Activated B cell treated with CpG ODN at 0.5 μM for 24 hours (primary cell): ENCODE measurements at regions of chr9 and their contacts with region 1.

Region 1: DNA sequence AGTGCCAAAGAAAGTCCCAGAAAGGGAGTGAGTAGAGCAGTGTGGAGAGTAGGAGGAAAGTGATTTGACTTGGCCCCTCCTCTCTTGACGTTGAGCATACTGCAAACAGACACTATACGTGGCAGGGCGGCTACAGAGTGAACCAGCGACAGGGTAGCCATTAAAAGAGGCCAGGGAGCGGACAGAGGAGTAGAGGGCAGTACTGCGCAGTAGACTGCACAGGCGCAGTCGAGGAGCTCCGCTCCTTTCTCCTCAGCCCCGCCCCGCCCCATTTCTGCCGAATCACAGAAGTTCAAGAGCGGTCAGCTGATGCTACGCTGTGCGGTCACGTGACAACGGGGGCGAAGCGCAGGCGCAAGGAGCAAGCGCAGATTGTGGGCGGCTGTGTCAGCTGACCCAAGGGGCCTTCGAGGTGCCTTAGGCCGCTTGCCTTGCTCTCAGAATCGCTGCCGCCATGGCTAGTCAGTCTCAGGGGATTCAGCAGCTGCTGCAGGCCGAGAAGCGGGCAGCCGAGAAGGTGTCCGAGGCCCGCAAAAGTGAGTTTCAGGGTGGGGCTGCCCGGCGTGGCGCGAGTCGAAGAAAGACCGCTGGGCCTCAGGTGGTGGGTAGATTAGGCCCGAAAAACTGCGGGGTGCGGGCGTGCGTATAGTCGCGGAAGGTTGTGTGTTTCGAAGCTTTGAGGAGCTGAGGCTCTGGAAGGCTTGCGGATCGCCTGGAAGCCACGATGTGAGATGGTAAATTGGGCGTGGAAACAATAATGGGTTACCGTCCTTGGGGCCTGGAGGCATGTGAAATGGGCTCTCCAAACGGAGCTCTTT is at the start of gene ATP6V1G1:
- DNase-seq: peak; percentile 96
- ATAC-seq: peak; percentile 93
- H3K4me3 Mint-ChIP-seq: peak within 1 kb of the TSS; percentile 99
- H3K27ac Mint-ChIP-seq: peak within 1 kb of the TSS; percentile 99
- H3K4me1 Mint-ChIP-seq: peaks cover 53% of the 10 kb centered on the region
- H3K27me3 Mint-ChIP-seq: no peaks in the 10 kb centered on the region
- CTCF ChIP-seq: no peak
- total RNA-seq, gene ATP6V1G1: 68.4 and 70.2 TPM in 2 replicates

Region 2: DNA sequence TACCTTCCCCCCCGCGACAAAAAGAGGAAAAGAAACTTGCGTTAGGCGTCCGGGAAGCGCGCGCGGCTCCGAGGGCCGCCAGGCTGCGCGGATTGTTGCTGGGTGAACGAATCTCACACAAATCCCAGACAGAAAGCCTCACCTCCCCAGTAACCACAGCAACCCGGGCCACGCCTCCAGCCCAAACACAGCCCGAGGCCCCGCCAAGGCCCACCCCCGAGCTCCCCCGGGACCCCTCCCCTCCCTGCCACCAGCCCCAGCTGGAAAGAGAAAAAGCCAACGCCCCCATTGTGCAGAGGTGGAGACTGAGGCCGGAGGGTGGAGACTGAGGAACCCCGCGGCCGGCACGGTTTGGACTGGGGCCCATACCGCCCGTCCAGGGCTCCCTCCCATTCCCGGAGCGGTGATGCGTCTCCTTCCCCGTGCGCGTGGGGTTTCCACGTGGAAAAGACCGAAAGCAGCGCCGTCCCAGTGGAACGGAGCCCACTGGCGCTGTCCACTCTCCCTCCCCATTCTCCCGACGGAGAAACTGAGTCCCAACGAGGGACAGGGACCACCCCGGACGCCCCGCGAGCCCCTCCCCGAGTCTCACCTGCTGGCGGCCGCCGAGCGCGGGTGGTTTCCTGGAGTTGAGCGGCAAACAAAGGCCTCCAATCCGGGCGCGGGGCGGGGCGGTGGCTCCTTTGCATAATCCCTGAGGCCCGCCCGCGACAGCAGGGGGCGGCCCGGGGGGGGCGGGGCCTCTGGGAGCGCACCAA is 189.6 kb before region 1 on chr9:
- CTCF ChIA-PET with region 1: interaction called, 5 read pairs
- POLR2A ChIA-PET with region 1: interaction called, 3 read pairs
- intact Hi-C with region 1: loop called (anchors 1 kb)
- DNase-seq: peak; percentile 96
- ATAC-seq: peak; percentile 78
- H3K4me3 Mint-ChIP-seq: peak overlapping the region; percentile 89
- H3K27ac Mint-ChIP-seq: peak overlapping the region; percentile 94
- H3K4me1 Mint-ChIP-seq: peaks cover 49% of the 10 kb centered on the region
- H3K27me3 Mint-ChIP-seq: no peaks in the 10 kb centered on the region
- CTCF ChIP-seq: no peak

Region 3: DNA sequence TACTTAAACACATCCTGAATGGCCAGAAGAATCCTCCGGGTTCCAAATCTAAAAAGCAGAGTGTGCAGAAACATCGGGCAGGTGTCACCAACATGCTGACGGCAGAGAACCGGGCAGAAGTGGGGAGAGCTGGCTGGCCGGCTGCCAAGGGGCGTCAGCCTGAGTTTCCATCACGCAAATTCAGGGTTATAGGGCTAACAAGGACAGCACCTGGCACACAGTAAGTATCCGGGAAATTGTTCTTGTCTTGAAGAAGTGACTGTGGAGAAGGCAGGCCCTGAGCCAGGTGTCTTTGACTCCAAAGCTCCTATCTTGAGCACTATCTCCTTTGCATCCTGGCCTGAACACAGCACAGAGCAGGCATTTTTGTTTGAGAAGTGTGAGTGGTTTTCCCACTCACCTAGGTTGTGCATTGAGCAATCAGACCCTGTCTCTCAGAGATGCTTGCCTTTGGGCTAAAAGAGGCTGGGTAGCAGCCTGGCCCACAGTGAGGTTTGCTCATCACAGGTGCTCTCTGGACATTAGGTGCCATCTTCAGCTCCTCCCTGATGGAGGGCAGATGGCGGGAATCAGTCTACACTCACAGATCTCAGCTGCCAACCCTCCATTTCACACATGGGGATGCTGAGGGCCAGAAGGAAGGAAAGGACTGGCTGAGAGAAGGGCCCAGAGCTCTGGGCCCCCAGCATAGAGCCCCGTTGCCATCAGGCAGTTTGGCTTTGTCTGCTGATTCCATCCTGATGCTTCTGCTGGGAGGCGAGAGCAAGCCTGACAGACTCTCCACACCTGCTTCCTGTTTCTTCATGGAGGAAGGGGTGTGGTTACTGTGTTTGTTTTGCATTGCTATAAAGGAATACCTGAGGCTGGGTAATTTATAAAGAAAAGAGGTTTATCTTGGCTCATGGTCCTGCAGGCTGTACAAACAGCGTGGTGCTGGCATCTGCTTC is 135.1 kb before region 1 on chr9:
- CTCF ChIA-PET with region 1: no interaction called
- POLR2A ChIA-PET with region 1: interaction called, 4 read pairs
- intact Hi-C with region 1: loop called (anchors 2 kb)
- DNase-seq: peak; percentile 61
- ATAC-seq: peak; percentile 35
- H3K4me3 Mint-ChIP-seq: peak overlapping the region; percentile 55
- H3K27ac Mint-ChIP-seq: peak overlapping the region; percentile 95
- H3K4me1 Mint-ChIP-seq: peaks cover 61% of the 10 kb centered on the region
- H3K27me3 Mint-ChIP-seq: no peaks in the 10 kb centered on the region
- CTCF ChIP-seq: no peak

Region 4: DNA sequence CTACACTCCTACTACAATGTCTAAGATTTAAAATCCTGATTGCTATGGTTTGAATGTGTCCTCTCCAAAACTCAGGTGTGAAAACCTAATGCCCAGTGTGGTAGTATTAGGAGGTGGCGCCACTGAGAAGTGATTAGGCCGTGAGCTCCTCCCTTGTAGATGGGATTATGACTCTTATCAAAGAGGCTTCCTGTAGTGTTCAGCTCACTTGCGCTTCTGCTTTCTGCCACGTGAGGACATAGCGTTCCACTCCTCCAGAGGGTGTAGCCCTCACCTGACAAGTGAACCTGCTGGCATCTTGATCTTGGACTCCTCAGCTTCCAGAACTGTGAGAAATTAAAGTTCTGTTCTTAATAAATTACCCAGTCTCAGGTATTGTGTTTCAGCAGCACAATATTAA is 49.4 kb before region 1 on chr9:
- CTCF ChIA-PET with region 1: interaction called, 28 read pairs
- POLR2A ChIA-PET with region 1: interaction called, 8 read pairs
- intact Hi-C with region 1: loop called (anchors 1 kb)
- DNase-seq: peak; percentile 19
- ATAC-seq: peak; percentile 100
- H3K4me3 Mint-ChIP-seq: no peak overlapping the region
- H3K27ac Mint-ChIP-seq: no peak overlapping the region
- H3K4me1 Mint-ChIP-seq: peaks cover 22% of the 10 kb centered on the region
- H3K27me3 Mint-ChIP-seq: no peaks in the 10 kb centered on the region
- CTCF ChIP-seq: no peak

Region 5: DNA sequence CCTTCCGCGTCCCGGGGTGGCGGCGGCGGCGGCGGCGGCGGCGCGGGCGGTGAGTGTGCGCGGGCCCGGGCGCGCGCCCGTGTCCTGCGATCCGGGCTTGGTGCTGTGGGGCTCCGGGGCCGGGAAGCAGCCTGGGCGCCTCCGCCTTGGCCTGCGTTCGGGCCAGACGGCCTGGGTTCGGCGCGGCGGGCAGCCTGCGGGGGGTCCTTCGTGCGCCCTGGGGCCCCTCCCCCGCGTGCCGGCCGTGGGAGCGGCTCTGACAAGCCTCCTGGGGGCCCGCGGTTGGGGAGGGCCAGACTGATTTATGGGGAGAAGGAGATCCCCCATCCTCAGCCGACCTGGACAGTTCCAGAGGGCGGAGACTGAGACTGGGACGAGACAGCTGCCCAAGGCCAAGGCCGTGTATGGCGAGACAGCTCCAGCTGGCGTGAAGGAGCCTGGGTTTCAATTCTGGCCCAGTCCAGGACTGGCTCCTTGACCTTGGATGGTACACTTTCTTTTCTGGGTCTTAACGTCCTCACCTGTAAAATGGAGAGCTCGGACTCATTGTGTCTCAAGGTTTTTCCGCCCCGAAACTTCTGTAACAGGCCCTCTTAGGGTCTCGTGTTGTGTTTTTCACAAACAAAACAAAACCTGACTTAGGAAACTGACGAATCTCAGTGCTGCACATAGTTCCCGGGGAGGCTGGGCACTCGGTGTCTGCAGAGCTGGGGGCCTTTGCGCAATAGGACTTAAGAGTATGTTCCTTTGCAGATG is 24.1 kb after region 1 on chr9:
- CTCF ChIA-PET with region 1: interaction called, 21 read pairs
- POLR2A ChIA-PET with region 1: interaction called, 161 read pairs
- intact Hi-C with region 1: loop called (anchors 1 kb)
- DNase-seq: no peak
- ATAC-seq: peak; percentile 51
- H3K4me3 Mint-ChIP-seq: peak overlapping the region; percentile 90
- H3K27ac Mint-ChIP-seq: peak overlapping the region; percentile 95
- H3K4me1 Mint-ChIP-seq: peaks cover 85% of the 10 kb centered on the region
- H3K27me3 Mint-ChIP-seq: no peaks in the 10 kb centered on the region
- CTCF ChIP-seq: no peak

Region 6: GRCh38 chr9:114681594-114682332 is 94.2 kb after region 1 on chr9 and contains the start of gene TEX48:
- CTCF ChIA-PET with region 1: interaction called, 7 read pairs
- POLR2A ChIA-PET with region 1: interaction called, 11 read pairs
- intact Hi-C with region 1: no loop called
- DNase-seq: no peak
- ATAC-seq: peak; percentile 94
- H3K4me3 Mint-ChIP-seq: no peak within 1 kb of the TSS
- H3K27ac Mint-ChIP-seq: peak within 1 kb of the TSS; percentile 36
- H3K4me1 Mint-ChIP-seq: peaks cover 5% of the 10 kb centered on the region
- H3K27me3 Mint-ChIP-seq: peaks cover 24% of the 10 kb centered on the region
- CTCF ChIP-seq: no peak
- total RNA-seq, gene TEX48: not detected in 2 replicates